ENCODE measurements at regions of chr9 and their contacts with region 1.

Region 1: GRCh38 chr9:98045234-98046179 is 11.0 kb upstream of the NANS start:
- DNase-seq: peak; percentile 67
- H3K4me3 Mint-ChIP-seq: peak overlapping the region; percentile 78
- H3K27ac Mint-ChIP-seq: peak overlapping the region; percentile 90
- H3K4me1 Mint-ChIP-seq: peaks cover 49% of the 10 kb centered on the region
- H3K27me3 Mint-ChIP-seq: no peaks in the 10 kb centered on the region

Region 2: DNA sequence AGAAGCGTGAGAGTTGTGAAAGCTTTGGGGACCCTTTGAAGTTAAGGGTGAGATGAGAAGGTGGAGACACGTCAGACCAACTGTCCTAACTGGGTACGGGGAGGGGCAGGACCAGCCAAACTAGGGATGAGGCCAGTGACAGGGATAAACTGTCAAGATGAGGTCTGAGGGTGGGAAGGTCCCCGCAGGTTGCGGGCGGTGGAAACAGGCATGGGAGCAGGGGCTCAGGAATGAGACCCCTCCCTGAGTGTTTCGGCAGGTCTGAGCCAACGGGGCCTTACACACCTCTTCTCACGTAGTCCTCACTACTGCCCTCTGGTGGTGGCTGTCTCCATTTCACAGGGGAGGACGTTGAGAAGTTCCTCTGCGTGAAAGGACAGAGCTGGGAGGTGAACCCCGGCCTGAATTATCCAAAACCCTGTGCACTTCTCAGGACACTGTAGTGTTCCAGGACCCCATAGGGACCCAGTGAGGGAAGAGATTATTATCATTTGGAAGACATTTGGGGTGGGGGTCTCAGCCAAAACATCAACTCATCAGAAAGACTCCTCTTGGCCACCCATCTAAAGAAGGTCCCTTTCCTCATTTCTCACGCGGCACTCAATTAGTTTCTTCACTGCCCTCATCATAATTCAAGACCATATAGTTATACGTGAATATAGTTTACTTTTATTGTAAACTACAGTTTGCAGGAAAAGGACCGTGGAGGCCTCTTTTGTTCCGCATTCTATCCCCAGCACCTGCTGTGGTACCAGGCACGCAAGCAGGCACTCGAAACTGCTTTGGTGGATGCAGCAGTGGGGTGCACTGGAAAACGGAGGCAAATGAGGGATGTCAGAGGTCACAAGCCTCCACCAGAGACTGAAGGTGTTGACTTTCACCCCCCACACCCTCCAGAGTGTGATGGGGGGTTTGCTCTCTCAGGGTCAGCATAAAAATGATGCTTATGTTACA is 10.6 kb before region 1 on chr9:
- CTCF ChIA-PET with region 1: interaction called, 37 read pairs
- POLR2A ChIA-PET with region 1: no interaction called
- DNase-seq: peak; percentile 94
- H3K4me3 Mint-ChIP-seq: no peak overlapping the region
- H3K27ac Mint-ChIP-seq: no peak overlapping the region
- H3K4me1 Mint-ChIP-seq: peaks cover 15% of the 10 kb centered on the region
- H3K27me3 Mint-ChIP-seq: no peaks in the 10 kb centered on the region